ENCODE measurements at regions of chrX and their contacts with region 1.

Region 1: DNA sequence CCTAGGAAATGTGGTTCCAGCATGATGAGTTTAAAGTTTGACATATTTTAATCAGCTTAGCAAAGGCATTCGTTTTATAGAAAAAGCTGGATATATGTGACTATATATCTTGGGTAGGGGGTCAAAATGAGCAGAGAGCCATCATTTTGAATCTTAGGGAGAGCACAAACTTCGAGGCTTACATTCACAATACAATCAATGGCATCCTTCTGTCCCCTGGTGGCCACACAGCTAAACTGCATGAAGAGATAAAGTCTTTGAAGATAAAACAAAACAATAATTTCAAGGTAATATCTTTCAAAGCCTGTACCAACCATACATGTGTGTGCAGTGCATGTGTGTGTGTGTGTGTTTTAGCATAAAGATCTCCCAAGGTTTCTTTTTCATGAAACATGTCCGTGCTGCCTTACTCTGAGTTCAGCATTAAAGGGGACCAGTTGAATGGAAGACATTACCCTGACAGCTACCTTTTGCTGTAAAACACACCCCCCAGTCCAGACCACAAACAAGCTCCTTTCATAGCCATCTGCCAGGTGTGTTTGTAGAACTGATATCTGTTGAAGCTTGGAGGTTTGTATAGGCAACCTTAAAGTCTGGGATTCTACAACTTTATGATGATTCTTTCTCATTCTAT is 22.0 kb downstream of the DYNLT3 start:
- DNase-seq: peak; percentile 70
- ATAC-seq: peak; percentile 66
- H3K4me3 Mint-ChIP-seq: no peak overlapping the region
- H3K27ac Mint-ChIP-seq: no peak overlapping the region
- H3K4me1 Mint-ChIP-seq: peaks cover 26% of the 10 kb centered on the region
- H3K27me3 Mint-ChIP-seq: no peaks in the 10 kb centered on the region

Region 2: DNA sequence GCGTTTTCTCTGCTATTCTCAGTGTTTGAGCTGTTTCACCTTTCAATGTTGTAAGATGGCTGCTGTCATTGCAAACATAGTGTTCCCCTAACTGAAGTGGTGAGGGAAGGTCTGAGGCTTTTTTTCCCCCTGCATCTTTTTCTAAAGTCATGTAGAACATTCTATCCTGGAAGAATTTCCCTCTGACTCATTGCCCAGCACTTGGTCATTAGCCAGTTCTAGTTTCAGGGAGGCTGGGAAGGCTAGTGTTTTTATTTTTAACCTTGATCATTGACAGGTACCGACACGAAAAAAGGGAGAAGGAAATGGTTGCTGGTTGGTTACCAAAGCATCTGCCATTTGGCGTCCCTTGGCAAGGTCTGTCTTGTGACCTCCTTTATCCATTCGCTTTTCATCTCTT is 247.3 kb before region 1 on chrX:
- CTCF ChIA-PET with region 1: interaction called, 10 read pairs
- DNase-seq: no peak
- ATAC-seq: no peak
- H3K4me3 Mint-ChIP-seq: no peak overlapping the region
- H3K27ac Mint-ChIP-seq: no peak overlapping the region
- H3K4me1 Mint-ChIP-seq: peaks cover 2% of the 10 kb centered on the region
- H3K27me3 Mint-ChIP-seq: peaks cover 11% of the 10 kb centered on the region

Region 3: GRCh38 chrX:37745354-37745753 is 80.0 kb before region 1 on chrX:
- CTCF ChIA-PET with region 1: interaction called, 107 read pairs
- DNase-seq: peak; percentile 87
- ATAC-seq: peak; percentile 94
- H3K4me3 Mint-ChIP-seq: no peak overlapping the region
- H3K27ac Mint-ChIP-seq: peak overlapping the region; percentile 78
- H3K4me1 Mint-ChIP-seq: peaks cover 17% of the 10 kb centered on the region
- H3K27me3 Mint-ChIP-seq: peaks cover 12% of the 10 kb centered on the region

Region 4: GRCh38 chrX:37942170-37942569 is 116.8 kb after region 1 on chrX:
- CTCF ChIA-PET with region 1: no interaction called
- DNase-seq: no peak
- ATAC-seq: no peak
- H3K4me3 Mint-ChIP-seq: no peak overlapping the region
- H3K27ac Mint-ChIP-seq: no peak overlapping the region
- H3K4me1 Mint-ChIP-seq: no peaks in the 10 kb centered on the region
- H3K27me3 Mint-ChIP-seq: no peaks in the 10 kb centered on the region

Measured in activated CD8-positive, alpha-beta memory T cell treated with anti-CD3 and anti-CD28 coated beads, Interleukin-2, amount 10 ng/mL, durations not matched to agents 7 days and 5 days (primary cell).